ENCODE measurements at regions of chr9 and their contacts with region 1.

Region 1: GRCh38 chr9:83956434-83957247 is 23.4 kb downstream of the HNRNPK start:
- DNase-seq: no peak
- H3K4me3 ChIP-seq: peak overlapping the region; percentile 20 to 56 (median 42)
- H3K27ac ChIP-seq: peak overlapping the region; percentile 6
- H3K4me1 ChIP-seq: peaks cover 12% of the 10 kb centered on the region
- H3K27me3 ChIP-seq: no peaks in the 10 kb centered on the region
- CTCF ChIP-seq: no peak
- POLR2A ChIP-seq: peak; percentile 44

Region 2: DNA sequence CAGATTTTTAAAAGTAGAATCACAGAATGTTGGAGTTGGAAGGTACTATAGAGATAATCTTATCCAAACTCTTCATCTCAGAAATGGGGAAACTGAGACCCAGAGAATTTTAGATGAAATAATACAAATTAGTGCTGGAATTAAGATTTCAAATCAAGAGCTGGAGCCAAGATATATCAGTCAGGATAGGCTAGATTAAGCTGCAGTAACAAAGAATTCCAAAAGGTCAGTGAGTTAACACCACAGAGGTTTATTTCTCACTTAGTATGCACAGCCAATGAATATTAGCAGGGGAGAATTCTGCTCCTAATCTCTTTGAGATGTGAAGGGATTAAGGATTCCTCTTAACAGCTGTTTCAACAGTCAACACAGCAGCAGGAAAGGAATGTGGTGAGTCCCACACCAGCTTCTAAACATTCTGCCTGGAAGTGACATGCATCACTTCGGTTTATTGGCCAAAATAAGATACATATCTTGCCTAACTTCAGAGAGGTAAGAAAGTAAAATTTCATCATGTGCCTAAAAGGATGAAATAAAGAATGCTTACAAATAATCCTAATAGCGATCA is 555.2 kb before region 1 on chr9:
- CTCF ChIA-PET with region 1: no interaction called
- POLR2A ChIA-PET with region 1: no interaction called
- dilution Hi-C with region 1: no loop called
- intact Hi-C with region 1: no loop called
- DNase-seq: no peak
- H3K4me3 ChIP-seq: no peak overlapping the region
- H3K27ac ChIP-seq: no peak overlapping the region
- H3K4me1 ChIP-seq: no peaks in the 10 kb centered on the region
- H3K27me3 ChIP-seq: no peaks in the 10 kb centered on the region
- CTCF ChIP-seq: no peak
- POLR2A ChIP-seq: no peak

Region 3: DNA sequence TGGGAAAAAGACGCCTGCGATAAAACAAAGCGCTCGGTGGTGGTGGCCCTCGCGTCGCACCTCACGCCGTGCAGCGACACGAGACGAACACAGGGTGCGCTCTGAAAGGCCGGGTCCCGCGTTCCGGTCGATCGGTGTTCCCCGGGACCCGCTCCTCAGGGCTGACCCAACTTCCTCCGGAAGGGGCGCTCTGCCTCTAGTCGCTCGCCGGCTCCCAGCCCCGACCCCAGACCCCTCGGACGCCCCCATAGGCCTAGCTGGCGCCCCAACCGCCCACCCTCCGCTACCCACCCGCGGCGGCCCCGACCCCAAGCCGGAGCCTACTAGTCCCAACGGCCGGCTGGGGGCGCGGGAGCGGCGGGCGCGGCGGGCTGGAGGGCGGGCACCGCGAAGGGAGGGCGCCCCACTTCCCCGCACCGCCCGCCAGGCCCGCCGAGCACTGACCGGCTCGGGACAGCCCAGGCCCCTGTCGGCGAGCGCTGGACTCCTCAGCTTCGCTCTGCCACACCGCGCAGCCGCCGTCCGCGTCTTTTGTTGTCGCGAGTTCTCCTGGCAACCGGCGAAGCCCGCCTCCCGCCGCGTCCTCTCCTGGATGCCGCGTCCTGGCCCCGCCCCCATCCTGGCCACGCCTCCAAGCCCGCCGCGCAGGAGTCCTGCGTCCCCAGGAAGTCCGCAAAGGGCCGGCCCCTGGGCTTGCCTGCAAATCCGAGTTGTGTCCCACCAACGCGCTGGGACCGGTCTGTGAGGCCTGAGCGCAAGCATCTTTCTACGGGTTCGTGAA is 35.5 kb before region 1 on chr9 and contains the start of gene KIF27:
- CTCF ChIA-PET with region 1: interaction called, 5 read pairs
- POLR2A ChIA-PET with region 1: interaction called, 3 read pairs
- dilution Hi-C with region 1: no loop called
- intact Hi-C with region 1: loop called (anchors 5 kb)
- DNase-seq: peak; percentile 98
- H3K4me3 ChIP-seq: peak within 1 kb of the TSS; percentile 41 to 78 (median 69)
- H3K27ac ChIP-seq: peak within 1 kb of the TSS; percentile 69
- H3K4me1 ChIP-seq: peaks cover 10% of the 10 kb centered on the region
- H3K27me3 ChIP-seq: no peaks in the 10 kb centered on the region
- CTCF ChIP-seq: peak; percentile 8 to 36
- POLR2A ChIP-seq: peak; percentile 93
- total RNA-seq, gene KIF27: 3.2 and 3.5 TPM in 2 replicates

Region 4: DNA sequence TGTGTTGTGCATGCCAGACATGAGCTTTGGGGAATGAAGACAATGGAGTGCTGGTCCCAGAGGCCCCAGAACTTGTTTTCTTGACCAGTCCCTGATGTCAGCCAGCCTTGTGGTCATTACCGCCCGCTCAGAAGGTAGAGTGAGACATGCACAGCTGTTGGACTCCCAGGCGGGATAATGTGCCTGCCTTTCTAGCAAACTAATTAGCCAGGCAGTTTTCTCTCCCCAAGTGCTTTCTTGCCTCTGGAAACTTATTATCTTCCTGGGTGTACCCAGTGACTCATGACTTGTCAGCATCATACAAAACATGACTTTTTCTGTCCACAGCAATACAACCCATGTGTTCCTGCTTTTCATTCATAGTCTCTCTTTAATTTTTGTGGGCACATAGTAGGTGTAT is 155.1 kb after region 1 on chr9:
- CTCF ChIA-PET with region 1: no interaction called
- POLR2A ChIA-PET with region 1: no interaction called
- dilution Hi-C with region 1: no loop called
- intact Hi-C with region 1: no loop called
- DNase-seq: no peak
- H3K4me3 ChIP-seq: no peak overlapping the region
- H3K27ac ChIP-seq: no peak overlapping the region
- H3K4me1 ChIP-seq: no peaks in the 10 kb centered on the region
- H3K27me3 ChIP-seq: no peaks in the 10 kb centered on the region
- CTCF ChIP-seq: no peak
- POLR2A ChIP-seq: no peak